ENCODE measurements at regions of chr20 and their contacts with region 1.

Region 1: DNA sequence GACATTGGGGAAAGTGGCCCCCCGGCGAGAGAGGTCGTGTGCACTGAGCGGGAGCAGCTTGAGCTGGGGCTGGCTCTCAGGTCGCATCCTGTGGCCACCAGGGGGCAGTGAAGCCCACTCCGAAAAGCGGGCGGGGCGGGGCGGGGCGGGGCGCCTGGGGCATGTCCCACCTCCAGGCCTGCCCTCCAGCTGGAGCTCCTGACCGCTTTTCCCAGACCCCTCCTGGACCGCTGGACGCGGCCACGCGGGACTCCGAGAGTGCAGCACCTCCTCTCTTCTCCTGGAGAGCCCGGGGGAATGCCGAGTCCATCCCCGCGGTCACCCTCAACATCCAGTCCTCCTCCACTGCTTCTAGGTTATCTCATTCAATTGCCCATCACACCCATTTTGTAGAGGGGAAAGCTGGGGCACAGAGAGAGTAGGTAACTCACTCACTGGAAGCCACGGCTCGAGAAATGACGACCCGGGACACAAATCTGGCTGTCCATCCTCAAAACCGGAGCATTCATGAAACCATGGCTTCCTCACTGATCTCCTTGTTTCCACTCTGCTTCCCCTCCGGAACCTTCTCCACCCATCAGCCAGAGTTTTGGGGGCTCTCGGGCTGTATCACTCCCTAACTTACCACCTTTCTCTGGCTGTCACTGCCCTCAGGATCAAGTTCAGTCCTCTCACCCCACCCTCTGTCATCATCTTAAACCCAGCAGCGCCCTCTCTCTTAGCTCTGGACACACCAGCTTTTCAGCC is 24.1 kb downstream of the COX4I2 start:
- DNase-seq: peak; percentile 87 to 90
- H3K4me3 ChIP-seq: no peak overlapping the region
- H3K4me3 Mint-ChIP-seq: peak overlapping the region; percentile 43
- H3K27ac Mint-ChIP-seq: peak overlapping the region; percentile 79
- H3K4me1 ChIP-seq: peaks cover 57% of the 10 kb centered on the region
- H3K4me1 Mint-ChIP-seq: peaks cover 68% of the 10 kb centered on the region
- H3K27me3 ChIP-seq: no peaks in the 10 kb centered on the region
- H3K27me3 Mint-ChIP-seq: no peaks in the 10 kb centered on the region
- CTCF ChIP-seq: peak; percentile 93 to 98

Region 2: GRCh38 chr20:31514159-31515071 is 147.4 kb before region 1 on chr20 and contains the start of gene HM13:
- CTCF ChIA-PET with region 1: no interaction called
- POLR2A ChIA-PET with region 1: no interaction called
- intact Hi-C with region 1: no loop called
- DNase-seq: peak; percentile 97 to 98
- H3K4me3 ChIP-seq: peak within 1 kb of the TSS; percentile 74
- H3K4me3 Mint-ChIP-seq: no peak within 1 kb of the TSS
- H3K27ac Mint-ChIP-seq: no peak within 1 kb of the TSS
- H3K4me1 ChIP-seq: peaks cover 22% of the 10 kb centered on the region
- H3K4me1 Mint-ChIP-seq: no peaks in the 10 kb centered on the region
- H3K27me3 ChIP-seq: no peaks in the 10 kb centered on the region
- H3K27me3 Mint-ChIP-seq: no peaks in the 10 kb centered on the region
- CTCF ChIP-seq: peak; percentile 98 to 100
- total RNA-seq, gene HM13: 435 and 443 TPM in 2 replicates

Region 3: DNA sequence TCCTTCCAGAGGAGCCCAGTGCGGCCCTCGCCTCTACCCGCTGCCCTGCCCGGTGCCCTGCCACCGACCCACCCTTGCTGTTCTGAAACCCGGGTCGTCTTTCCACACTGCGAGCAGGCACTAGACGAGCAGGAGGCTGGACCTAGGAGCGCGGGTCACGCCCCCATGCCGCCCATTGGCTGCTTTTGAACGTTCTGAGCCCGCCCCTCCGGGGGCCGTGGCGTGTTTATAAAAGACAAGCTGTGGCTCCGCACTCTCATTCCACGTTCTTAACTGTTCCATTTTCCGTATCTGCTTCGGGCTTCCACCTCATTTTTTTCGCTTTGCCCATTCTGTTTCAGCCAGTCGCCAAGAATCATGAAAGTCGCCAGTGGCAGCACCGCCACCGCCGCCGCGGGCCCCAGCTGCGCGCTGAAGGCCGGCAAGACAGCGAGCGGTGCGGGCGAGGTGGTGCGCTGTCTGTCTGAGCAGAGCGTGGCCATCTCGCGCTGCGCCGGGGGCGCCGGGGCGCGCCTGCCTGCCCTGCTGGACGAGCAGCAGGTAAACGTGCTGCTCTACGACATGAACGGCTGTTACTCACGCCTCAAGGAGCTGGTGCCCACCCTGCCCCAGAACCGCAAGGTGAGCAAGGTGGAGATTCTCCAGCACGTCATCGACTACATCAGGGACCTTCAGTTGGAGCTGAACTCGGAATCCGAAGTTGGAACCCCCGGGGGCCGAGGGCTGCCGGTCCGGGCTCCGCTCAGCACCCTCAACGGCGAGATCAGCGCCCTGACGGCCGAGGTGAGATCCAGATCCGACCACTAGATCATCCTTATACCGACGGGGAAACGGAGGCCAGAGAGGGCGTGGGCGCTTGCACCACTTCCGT is 56.5 kb before region 1 on chr20 and contains the start of gene ID1:
- CTCF ChIA-PET with region 1: interaction called, 13 read pairs
- POLR2A ChIA-PET with region 1: interaction called, 5 read pairs
- intact Hi-C with region 1: no loop called
- DNase-seq: peak; percentile 100
- H3K4me3 ChIP-seq: peak within 1 kb of the TSS; percentile 63
- H3K4me3 Mint-ChIP-seq: peak within 1 kb of the TSS; percentile 88
- H3K27ac Mint-ChIP-seq: peak within 1 kb of the TSS; percentile 98
- H3K4me1 ChIP-seq: peaks cover 54% of the 10 kb centered on the region
- H3K4me1 Mint-ChIP-seq: peaks cover 49% of the 10 kb centered on the region
- H3K27me3 ChIP-seq: no peaks in the 10 kb centered on the region
- H3K27me3 Mint-ChIP-seq: no peaks in the 10 kb centered on the region
- CTCF ChIP-seq: no peak
- total RNA-seq, gene ID1: 157 and 163 TPM in 2 replicates

Region 4: GRCh38 chr20:31674895-31675827 is 13.4 kb after region 1 on chr20:
- CTCF ChIA-PET with region 1: interaction called, 52 read pairs
- POLR2A ChIA-PET with region 1: interaction called, 12 read pairs
- intact Hi-C with region 1: loop called (anchors 1 kb)
- DNase-seq: no peak
- H3K4me3 ChIP-seq: no peak overlapping the region
- H3K4me3 Mint-ChIP-seq: peak overlapping the region; percentile 26
- H3K27ac Mint-ChIP-seq: peak overlapping the region; percentile 81
- H3K4me1 ChIP-seq: peaks cover 78% of the 10 kb centered on the region
- H3K4me1 Mint-ChIP-seq: peaks cover 72% of the 10 kb centered on the region
- H3K27me3 ChIP-seq: no peaks in the 10 kb centered on the region
- H3K27me3 Mint-ChIP-seq: no peaks in the 10 kb centered on the region
- CTCF ChIP-seq: no peak

Region 5: DNA sequence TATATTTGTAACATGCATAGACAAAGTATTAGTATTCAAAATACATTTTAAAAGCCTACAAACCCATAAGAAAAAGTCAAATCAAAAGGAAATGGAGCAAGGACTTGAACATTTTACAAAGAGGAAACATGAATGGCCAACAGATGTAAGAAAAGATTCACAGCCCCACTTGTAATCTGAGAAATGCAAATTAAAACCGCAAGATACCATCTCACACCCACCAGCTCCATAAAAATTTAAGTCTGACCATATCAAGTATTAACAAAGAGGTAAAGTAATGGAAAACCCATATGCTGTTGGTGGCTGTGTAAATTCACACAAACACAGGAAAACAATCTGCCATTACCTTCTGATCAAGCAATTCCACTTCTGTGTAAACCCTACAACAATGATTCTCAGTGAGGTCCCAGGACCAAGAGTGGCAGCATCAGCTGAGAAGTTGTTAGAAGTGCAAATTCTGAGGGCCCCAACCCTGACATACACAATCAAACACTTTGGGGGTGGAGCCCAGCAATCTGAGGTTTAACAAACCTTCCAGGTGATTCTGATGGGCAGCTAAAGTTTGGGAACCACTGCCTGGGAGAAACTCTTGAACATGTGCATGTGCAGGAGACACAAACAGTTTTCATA is 30.0 kb after region 1 on chr20:
- CTCF ChIA-PET with region 1: interaction called, 12 read pairs
- POLR2A ChIA-PET with region 1: interaction called, 7 read pairs
- intact Hi-C with region 1: loop called (anchors 1 kb)
- DNase-seq: no peak
- H3K4me3 ChIP-seq: no peak overlapping the region
- H3K4me3 Mint-ChIP-seq: peak overlapping the region; percentile 5
- H3K27ac Mint-ChIP-seq: peak overlapping the region; percentile 27
- H3K4me1 ChIP-seq: peaks cover 62% of the 10 kb centered on the region
- H3K4me1 Mint-ChIP-seq: peaks cover 72% of the 10 kb centered on the region
- H3K27me3 ChIP-seq: no peaks in the 10 kb centered on the region
- H3K27me3 Mint-ChIP-seq: no peaks in the 10 kb centered on the region
- CTCF ChIP-seq: no peak

Region 6: GRCh38 chr20:31704225-31705119 is 42.7 kb after region 1 on chr20:
- CTCF ChIA-PET with region 1: interaction called, 14 read pairs
- POLR2A ChIA-PET with region 1: interaction called, 17 read pairs
- intact Hi-C with region 1: loop called (anchors 1 kb)
- DNase-seq: peak; percentile 99 to 100
- H3K4me3 ChIP-seq: no peak overlapping the region
- H3K4me3 Mint-ChIP-seq: peak overlapping the region; percentile 48
- H3K27ac Mint-ChIP-seq: peak overlapping the region; percentile 98
- H3K4me1 ChIP-seq: peaks cover 93% of the 10 kb centered on the region
- H3K4me1 Mint-ChIP-seq: peaks cover 74% of the 10 kb centered on the region
- H3K27me3 ChIP-seq: no peaks in the 10 kb centered on the region
- H3K27me3 Mint-ChIP-seq: no peaks in the 10 kb centered on the region
- CTCF ChIP-seq: no peak

Region 7: DNA sequence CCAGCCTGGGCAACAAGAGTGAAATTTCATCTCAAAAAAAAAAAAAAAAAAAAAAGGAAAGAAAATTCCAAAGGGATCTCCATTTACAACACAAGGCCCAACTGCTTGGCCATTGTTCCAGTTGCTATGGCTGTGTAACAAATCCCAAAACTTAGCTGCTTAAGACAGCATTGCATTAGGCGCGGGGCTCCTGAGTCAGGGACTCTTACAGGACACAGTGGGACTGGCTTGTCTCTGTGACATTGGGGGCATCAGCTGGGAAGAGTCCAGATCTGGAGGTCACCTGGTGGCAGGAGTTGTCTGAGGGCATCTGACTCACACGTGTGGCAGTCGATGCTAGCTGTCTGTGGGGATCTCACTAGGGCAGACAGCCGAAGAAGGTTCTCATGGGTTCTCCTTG is 244.2 kb after region 1 on chr20:
- CTCF ChIA-PET with region 1: no interaction called
- POLR2A ChIA-PET with region 1: interaction called, 12 read pairs
- intact Hi-C with region 1: no loop called
- DNase-seq: peak in 1 of 2 experiments; percentile 37
- H3K4me3 ChIP-seq: no peak overlapping the region
- H3K4me3 Mint-ChIP-seq: no peak overlapping the region
- H3K27ac Mint-ChIP-seq: no peak overlapping the region
- H3K4me1 ChIP-seq: no peaks in the 10 kb centered on the region
- H3K4me1 Mint-ChIP-seq: no peaks in the 10 kb centered on the region
- H3K27me3 ChIP-seq: no peaks in the 10 kb centered on the region
- H3K27me3 Mint-ChIP-seq: peaks cover 7% of the 10 kb centered on the region
- CTCF ChIP-seq: no peak

Measured in Caco-2 (cell line).